Activated B cell treated with CpG ODN at 0.5 μM for 24 hours (primary cell): ENCODE measurements at regions of chr6 and their contacts with region 1.

Region 1: DNA sequence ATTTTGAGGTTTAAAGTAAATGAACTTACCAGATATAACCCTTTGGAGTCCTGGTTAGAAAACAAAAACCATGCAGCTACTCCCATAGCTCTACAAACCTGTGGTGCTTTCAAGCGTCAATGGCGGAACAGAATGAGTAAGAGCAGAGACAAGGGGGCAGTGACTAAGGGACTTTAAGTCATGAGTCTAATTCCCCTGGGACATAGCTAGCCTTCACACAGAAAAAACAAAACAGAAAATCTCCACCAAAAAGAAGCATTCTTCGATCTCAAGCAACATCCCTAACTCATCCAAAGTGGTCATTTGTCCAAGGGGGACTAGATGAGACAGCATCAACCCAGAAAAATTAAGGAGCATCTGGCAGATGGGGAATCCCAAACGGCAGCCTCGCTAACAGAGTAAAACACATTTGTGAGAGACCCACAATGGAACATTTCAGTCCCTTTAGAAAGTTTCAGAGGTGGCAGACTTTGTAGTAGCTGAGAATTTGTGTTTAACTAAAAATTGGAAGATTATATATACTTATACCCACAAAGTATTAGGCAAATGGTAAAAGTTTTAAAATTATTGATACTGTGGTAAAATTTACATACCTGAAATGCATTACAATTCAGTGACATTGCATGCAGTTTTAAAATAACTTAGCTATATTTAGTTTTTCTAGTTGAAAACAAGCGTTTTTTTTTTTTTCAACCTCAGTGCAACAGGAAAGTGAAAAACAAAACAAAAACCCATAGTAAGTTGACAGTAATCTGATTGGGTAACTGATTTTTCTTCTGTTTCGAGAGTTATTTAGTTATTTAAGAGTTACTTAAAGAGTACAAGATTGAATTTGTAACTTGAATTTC is 67.5 kb downstream of the KCNQ5 start:
- DNase-seq: no peak
- ATAC-seq: peak; percentile 100
- H3K4me3 Mint-ChIP-seq: peak overlapping the region; percentile 76
- H3K27ac Mint-ChIP-seq: peak overlapping the region; percentile 82
- H3K4me1 Mint-ChIP-seq: peaks cover 13% of the 10 kb centered on the region
- H3K27me3 Mint-ChIP-seq: no peaks in the 10 kb centered on the region
- CTCF ChIP-seq: no peak

Region 2: GRCh38 chr6:72305971-72306370 is 383.4 kb before region 1 on chr6:
- CTCF ChIA-PET with region 1: no interaction called
- POLR2A ChIA-PET with region 1: no interaction called
- intact Hi-C with region 1: no loop called
- DNase-seq: no peak
- ATAC-seq: no peak
- H3K4me3 Mint-ChIP-seq: no peak overlapping the region
- H3K27ac Mint-ChIP-seq: no peak overlapping the region
- H3K4me1 Mint-ChIP-seq: no peaks in the 10 kb centered on the region
- H3K27me3 Mint-ChIP-seq: no peaks in the 10 kb centered on the region
- CTCF ChIP-seq: no peak

Region 3: DNA sequence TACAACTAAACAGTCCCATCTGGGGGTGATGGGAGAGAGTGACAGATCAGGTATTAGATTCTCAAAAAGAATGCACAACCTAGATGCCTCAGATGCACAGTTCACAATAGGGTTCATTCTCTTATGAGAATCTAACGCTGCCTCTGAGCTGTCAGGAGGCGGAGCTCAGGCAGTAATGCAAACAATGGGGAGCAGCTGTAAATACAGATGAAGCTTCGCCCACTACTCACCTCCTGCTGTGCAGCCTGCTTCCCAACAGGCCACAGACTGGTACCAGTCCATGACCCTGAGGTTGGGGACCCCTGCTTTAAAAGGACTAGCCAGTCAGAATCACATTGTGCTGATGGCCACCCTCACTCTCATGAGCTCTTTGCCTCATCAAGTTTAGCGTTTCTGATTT is 314.5 kb before region 1 on chr6:
- CTCF ChIA-PET with region 1: no interaction called
- POLR2A ChIA-PET with region 1: no interaction called
- intact Hi-C with region 1: no loop called
- DNase-seq: no peak
- ATAC-seq: no peak
- H3K4me3 Mint-ChIP-seq: no peak overlapping the region
- H3K27ac Mint-ChIP-seq: no peak overlapping the region
- H3K4me1 Mint-ChIP-seq: peaks cover 12% of the 10 kb centered on the region
- H3K27me3 Mint-ChIP-seq: no peaks in the 10 kb centered on the region
- CTCF ChIP-seq: no peak

Region 4: DNA sequence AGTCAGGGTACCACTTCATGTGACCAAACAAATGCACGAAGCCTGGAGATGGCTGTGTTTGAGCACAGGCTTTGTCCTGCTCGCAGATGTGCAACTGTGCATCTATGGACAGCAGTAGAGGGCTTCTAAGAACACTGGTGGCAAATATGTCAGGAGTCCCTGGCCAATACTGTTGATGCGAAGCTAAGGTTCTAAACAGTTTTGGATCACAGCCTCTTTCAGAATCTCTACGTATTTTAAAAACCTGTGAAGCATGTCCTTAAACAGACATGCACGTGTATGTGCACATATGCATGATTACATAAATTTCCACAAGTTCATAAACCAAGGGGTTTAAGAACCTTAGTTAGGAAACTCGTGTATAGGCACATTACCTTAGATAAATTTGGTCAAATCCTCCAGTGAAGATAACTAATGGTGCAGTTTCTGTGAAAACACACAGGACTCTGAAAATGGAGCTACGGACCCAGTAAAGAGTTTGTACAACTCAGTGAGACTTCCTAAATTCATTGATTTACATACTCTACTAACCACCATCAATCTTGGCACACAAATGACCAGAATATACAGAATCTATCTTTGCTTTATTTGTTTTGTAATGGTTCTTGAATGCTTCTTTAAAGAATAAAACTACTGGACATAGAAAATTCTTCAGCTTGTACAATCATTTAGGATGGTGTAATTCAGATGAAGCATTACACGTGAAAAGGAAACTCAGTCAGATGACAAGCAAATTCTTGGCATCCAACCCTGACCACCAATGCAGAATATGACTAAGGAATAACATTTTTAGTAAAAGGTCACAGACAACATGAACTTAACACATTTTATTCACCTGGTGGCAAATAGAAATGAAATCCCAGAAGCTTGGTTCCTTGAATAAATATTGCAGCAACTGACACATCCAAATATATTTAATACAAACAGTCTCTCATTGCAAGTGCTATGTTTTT is 40.0 kb before region 1 on chr6:
- CTCF ChIA-PET with region 1: no interaction called
- POLR2A ChIA-PET with region 1: interaction called, 5 read pairs
- intact Hi-C with region 1: loop called (anchors 1 kb)
- DNase-seq: no peak
- ATAC-seq: peak; percentile 54
- H3K4me3 Mint-ChIP-seq: peak overlapping the region; percentile 61
- H3K27ac Mint-ChIP-seq: peak overlapping the region; percentile 83
- H3K4me1 Mint-ChIP-seq: peaks cover 64% of the 10 kb centered on the region
- H3K27me3 Mint-ChIP-seq: no peaks in the 10 kb centered on the region
- CTCF ChIP-seq: no peak

Region 5: DNA sequence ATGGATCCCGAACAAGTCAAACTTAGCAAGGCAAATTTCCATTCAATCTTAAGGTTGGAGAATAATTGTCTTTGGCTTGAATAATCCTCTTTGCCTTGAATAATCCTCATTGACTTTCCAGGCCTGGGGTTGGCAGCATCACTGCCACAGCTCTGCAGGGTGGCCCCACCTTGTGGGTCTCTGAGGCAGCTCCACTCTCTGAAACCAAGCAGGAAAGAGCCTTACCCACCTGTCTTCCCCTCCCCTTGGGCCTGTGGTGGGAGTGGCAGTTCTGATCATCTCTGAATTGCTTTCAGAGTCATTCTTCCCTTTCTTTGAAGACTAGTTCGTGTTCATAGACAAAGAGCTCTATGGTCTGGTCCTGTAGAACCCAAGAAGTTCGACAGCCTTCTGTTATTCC is 20.0 kb before region 1 on chr6:
- CTCF ChIA-PET with region 1: no interaction called
- POLR2A ChIA-PET with region 1: no interaction called
- intact Hi-C with region 1: loop called (anchors 2 kb)
- DNase-seq: no peak
- ATAC-seq: no peak
- H3K4me3 Mint-ChIP-seq: no peak overlapping the region
- H3K27ac Mint-ChIP-seq: no peak overlapping the region
- H3K4me1 Mint-ChIP-seq: peaks cover 7% of the 10 kb centered on the region
- H3K27me3 Mint-ChIP-seq: no peaks in the 10 kb centered on the region
- CTCF ChIP-seq: no peak

Region 6: GRCh38 chr6:72704979-72705378 is 15.6 kb after region 1 on chr6:
- CTCF ChIA-PET with region 1: no interaction called
- POLR2A ChIA-PET with region 1: no interaction called
- intact Hi-C with region 1: loop called (anchors 2 kb)
- DNase-seq: no peak
- ATAC-seq: no peak
- H3K4me3 Mint-ChIP-seq: no peak overlapping the region
- H3K27ac Mint-ChIP-seq: no peak overlapping the region
- H3K4me1 Mint-ChIP-seq: no peaks in the 10 kb centered on the region
- H3K27me3 Mint-ChIP-seq: no peaks in the 10 kb centered on the region
- CTCF ChIP-seq: no peak

Region 7: GRCh38 chr6:73290435-73290834 is 601.1 kb after region 1 on chr6:
- CTCF ChIA-PET with region 1: no interaction called
- POLR2A ChIA-PET with region 1: no interaction called
- intact Hi-C with region 1: no loop called
- DNase-seq: no peak
- ATAC-seq: no peak
- H3K4me3 Mint-ChIP-seq: no peak overlapping the region
- H3K27ac Mint-ChIP-seq: no peak overlapping the region
- H3K4me1 Mint-ChIP-seq: no peaks in the 10 kb centered on the region
- H3K27me3 Mint-ChIP-seq: no peaks in the 10 kb centered on the region
- CTCF ChIP-seq: no peak